Pancreas (tissue), 10 donors: ENCODE measurements at regions of chr5 and their contacts with region 1.

Region 1: GRCh38 chr5:61658592-61659008 is 326.5 kb downstream of the ZSWIM6 start:
- DNase-seq: peak; percentile 71 to 99 (median 88)
- ATAC-seq: peak; percentile 94 to 97 (median 95)
- H3K4me3 ChIP-seq: peak overlapping the region in 2 of 4 donors; percentile 18 to 30
- H3K27ac ChIP-seq: peak overlapping the region; percentile 29 to 58 (median 50)
- H3K4me1 ChIP-seq: no peaks in the 10 kb centered on the region
- H3K27me3 ChIP-seq: no peaks in the 10 kb centered on the region
- CTCF ChIP-seq: peak; percentile 90 to 95 (median 92)

Region 2: DNA sequence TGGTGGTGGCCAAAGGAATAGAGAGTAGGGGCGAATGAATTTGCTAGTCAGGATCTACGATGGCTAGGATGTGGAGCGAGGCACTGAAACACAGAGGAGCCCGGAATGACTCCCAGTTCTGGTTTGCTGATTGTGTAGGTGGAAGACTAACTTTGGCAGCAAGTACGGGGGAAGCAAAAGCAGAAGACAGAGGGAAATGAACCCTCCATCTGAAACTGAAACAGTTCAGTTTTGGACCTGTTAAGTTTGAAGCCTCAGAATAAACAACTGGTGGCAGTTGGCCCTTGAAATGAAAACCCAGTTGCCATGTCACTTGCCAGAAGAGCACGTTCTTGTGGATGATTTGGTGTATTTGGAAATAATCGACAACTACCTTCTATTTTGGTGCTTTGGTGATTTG is 480.9 kb before region 1 on chr5:
- intact Hi-C with region 1: loop called in 1 of 3 experiments (anchors 10 kb)
- DNase-seq: no peak
- ATAC-seq: no peak
- H3K4me3 ChIP-seq: no peak overlapping the region
- H3K27ac ChIP-seq: no peak overlapping the region
- H3K4me1 ChIP-seq: peaks cover 0 to 16% (median 0%) of the 10 kb centered on the region in 3 donors
- H3K27me3 ChIP-seq: no peaks in the 10 kb centered on the region
- CTCF ChIP-seq: no peak

Region 3: GRCh38 chr5:61331407-61332357 is 326.9 kb before region 1 on chr5 and contains the start of gene ZSWIM6:
- intact Hi-C with region 1: loop called in 1 of 3 experiments (anchors 10 kb)
- DNase-seq: peak; percentile 98 to 100 (median 99)
- ATAC-seq: peak; percentile 79 to 87 (median 82)
- H3K4me3 ChIP-seq: peak within 1 kb of the TSS; percentile 84 to 98 (median 90)
- H3K27ac ChIP-seq: peak within 1 kb of the TSS; percentile 92 to 99 (median 95)
- H3K4me1 ChIP-seq: peaks cover 14 to 17% (median 15%) of the 10 kb centered on the region in 3 donors
- H3K27me3 ChIP-seq: no peaks in the 10 kb centered on the region
- CTCF ChIP-seq: no peak
- total RNA-seq, gene ZSWIM6: 5.8 to 12.9 (median 6.2) TPM

Region 4: DNA sequence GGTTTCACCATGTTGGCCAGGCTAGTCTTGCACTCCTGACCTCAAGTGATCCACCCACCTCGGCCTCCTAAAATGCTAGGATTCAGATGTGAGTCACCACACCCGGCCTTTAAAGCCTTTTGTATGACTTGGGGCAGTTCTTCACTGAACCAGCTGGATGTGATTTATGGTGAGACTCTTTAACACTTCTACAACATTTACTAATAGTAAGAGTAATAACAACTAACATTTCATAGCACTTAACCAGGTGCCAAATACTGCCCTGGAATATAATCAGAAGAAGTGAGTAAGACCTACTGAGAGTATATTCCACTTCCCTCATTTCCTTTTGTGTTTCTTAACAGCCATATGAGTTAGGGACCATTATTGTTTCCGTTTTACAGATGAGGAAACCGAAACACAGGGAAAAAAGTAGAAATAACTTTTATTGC is 316.5 kb before region 1 on chr5:
- intact Hi-C with region 1: loop called in 2 of 3 experiments (anchors 10 kb)
- DNase-seq: no peak
- ATAC-seq: no peak
- H3K4me3 ChIP-seq: no peak overlapping the region
- H3K27ac ChIP-seq: no peak overlapping the region
- H3K4me1 ChIP-seq: peaks cover 10 to 28% (median 18%) of the 10 kb centered on the region in 3 donors
- H3K27me3 ChIP-seq: no peaks in the 10 kb centered on the region
- CTCF ChIP-seq: no peak